ENCODE measurements at regions of chr12 and their contacts with region 1.

Region 1: DNA sequence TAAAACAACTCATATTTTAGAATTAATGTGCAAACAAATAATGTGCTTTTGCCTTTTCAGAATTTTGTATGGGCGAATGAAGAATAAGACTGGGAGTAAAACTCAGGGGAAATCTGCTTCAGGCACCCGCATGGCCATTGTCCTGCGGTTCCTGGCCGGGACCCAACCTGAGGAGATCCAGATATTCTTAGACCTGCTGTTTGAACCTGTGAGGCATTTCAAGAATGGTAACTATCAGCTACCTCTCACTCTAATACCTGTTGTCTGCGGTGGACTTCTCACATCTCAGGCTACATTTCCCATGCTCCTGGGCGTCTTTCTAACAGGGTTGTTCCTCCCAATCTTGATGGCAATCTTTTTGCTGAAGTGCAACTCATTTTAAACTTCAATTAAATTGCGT is 47.1 kb downstream of the UTP20 start:
- DNase-seq: no peak
- ATAC-seq: no peak
- H3K4me3 ChIP-seq: no peak overlapping the region
- H3K27ac ChIP-seq: no peak overlapping the region
- H3K4me1 ChIP-seq: no peaks in the 10 kb centered on the region
- H3K27me3 ChIP-seq: no peaks in the 10 kb centered on the region
- CTCF ChIP-seq: no peak
- EP300 ChIP-seq: no peak
- POLR2A ChIP-seq: no peak
- RAD21 ChIP-seq: no peak

Region 2: DNA sequence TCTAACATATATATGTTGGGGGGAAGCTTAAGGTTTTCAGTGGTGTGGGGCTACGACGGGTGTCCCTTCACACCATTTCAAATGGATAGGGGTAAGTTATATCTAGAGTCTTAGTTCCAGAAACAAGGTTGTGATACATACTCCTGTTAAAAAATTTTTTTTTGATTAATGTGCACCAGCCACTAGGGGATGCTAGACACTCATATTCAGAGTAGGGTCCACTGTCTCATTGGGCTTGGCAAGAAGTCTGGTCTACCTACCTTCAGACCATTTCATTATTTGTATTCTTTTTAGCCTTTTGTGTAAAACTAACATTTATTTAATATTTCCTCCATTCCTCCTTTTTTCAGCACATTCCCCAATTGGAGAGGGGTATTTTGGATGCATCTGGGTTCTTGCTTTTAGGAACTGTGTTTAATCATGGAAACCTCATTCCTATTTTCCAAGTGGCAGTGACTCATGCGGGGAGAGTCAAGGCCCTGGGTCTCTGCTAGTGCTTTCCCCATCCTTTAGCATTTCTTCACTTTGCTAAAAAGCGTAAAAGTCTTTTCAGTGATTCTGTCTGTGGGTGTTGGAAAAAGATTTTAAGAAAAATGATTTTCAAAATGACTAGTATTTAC is 499.0 kb before region 1 on chr12:
- CTCF ChIA-PET with region 1: no interaction called
- POLR2A ChIA-PET with region 1: no interaction called
- in situ Hi-C with region 1: no loop called
- intact Hi-C with region 1: loop called (anchors 5 kb)
- DNase-seq: peak; percentile 14 to 21 (median 16)
- ATAC-seq: peak; percentile 64; the same call in 2 of the 3 replicates
- H3K4me3 ChIP-seq: no peak overlapping the region
- H3K27ac ChIP-seq: no peak overlapping the region
- H3K4me1 ChIP-seq: no peaks in the 10 kb centered on the region
- H3K27me3 ChIP-seq: no peaks in the 10 kb centered on the region
- CTCF ChIP-seq: peak; percentile 17 to 62 (median 48); a peak in 3 of 6 replicates
- EP300 ChIP-seq: no peak
- POLR2A ChIP-seq: no peak
- RAD21 ChIP-seq: peak; percentile 57 to 63

Region 3: DNA sequence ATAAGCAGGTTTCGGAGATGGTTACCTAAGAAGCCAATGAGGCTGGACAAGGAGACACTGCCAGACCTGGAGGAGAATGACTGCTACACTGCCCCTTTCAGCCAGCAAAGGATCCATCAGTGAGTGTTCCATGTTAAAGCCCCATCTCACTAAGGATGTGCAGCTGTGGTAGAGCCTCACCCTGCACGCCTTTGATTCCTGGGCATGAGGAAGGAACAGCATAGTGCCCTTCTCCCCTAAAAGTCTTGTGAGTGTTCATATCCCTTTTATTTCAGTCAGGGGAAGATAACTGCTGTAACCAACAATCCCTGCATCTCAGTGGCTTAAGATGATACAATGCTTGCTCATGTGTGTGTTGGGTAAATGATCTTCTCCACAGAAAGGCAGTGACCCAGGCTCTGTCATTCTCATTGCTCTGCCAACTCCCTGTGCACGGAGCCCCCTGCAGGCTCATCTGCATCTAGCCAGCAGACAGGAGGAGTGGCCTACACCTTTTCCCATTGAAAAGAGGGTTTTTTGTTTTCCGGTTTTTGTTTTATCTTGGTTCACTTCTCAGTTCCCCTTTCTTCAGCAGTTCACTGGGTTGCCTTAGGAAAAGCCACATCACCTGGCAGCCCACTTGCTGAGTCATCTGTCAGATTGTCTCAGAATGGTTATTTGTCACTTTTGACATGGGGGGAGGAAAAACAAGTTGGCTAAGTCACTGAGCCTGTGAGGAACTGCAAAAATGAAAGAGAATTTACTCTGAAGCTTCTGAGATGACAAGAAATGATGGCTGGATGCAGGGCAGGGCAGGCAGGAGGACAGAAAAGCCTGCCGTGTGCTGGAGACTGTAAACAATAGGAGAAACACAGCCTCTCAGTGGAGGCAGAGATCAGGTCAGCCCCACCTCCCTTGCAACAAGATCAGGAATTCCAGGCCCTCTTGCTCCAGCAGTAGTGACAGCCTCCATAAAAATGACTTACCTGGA is 339.2 kb before region 1 on chr12:
- CTCF ChIA-PET with region 1: no interaction called
- POLR2A ChIA-PET with region 1: no interaction called
- in situ Hi-C with region 1: no loop called
- intact Hi-C with region 1: loop called (anchors 10 kb)
- DNase-seq: peak; percentile 12 to 65 (median 23)
- ATAC-seq: peak; percentile 88
- H3K4me3 ChIP-seq: no peak overlapping the region
- H3K27ac ChIP-seq: no peak overlapping the region
- H3K4me1 ChIP-seq: no peaks in the 10 kb centered on the region; a peak in 2 of 5 replicates
- H3K27me3 ChIP-seq: no peaks in the 10 kb centered on the region
- CTCF ChIP-seq: peak; percentile 23 to 39 (median 34); a peak in 2 of 6 replicates
- EP300 ChIP-seq: no peak
- POLR2A ChIP-seq: no peak
- RAD21 ChIP-seq: peak in 1 of 2 experiments; percentile 25; a peak in 1 of 4 replicates

Region 4: DNA sequence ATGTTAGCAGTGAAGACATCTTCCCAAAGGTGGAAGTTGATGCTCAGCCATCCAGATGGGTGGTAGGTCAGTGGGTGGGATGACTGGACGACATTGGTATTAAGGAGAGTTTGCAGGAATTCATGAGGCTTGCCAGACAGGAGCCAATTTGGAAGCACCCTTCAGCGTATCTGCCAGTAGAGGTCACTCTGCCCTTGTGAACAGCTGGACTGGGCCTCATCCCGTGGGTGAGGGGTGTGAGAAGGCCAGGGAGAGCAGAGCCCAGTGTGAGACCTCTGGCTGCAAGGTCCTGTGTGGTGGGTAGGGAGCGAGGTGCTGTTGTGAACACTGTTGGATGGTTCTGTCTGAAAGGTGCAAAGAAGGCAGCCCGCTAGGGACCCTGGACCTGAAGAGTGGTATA is 154.7 kb before region 1 on chr12:
- CTCF ChIA-PET with region 1: no interaction called
- POLR2A ChIA-PET with region 1: no interaction called
- in situ Hi-C with region 1: no loop called
- intact Hi-C with region 1: loop called (anchors 10 kb)
- DNase-seq: peak; percentile 16 to 42 (median 22)
- ATAC-seq: peak; percentile 84
- H3K4me3 ChIP-seq: no peak overlapping the region
- H3K27ac ChIP-seq: no peak overlapping the region
- H3K4me1 ChIP-seq: no peaks in the 10 kb centered on the region
- H3K27me3 ChIP-seq: no peaks in the 10 kb centered on the region
- CTCF ChIP-seq: peak; percentile 41 to 54 (median 50)
- EP300 ChIP-seq: no peak
- POLR2A ChIP-seq: no peak
- RAD21 ChIP-seq: peak; percentile 8 to 50; a peak in 2 of 4 replicates

Measured in K562 (cell line).